Activated CD4-positive, alpha-beta T cell treated with anti-CD3 and anti-CD28 coated beads, Interleukin-2, amount 10 ng/mL, durations not matched to agents 24 days and 14 days (primary cell): ENCODE measurements at regions of chr6 and their contacts with region 1.

Region 1: GRCh38 chr6:122399384-122400158 is at the start of gene HSF2:
- DNase-seq: peak; percentile 97
- H3K4me3 Mint-ChIP-seq: peak within 1 kb of the TSS; percentile 99
- H3K27ac Mint-ChIP-seq: peak within 1 kb of the TSS; percentile 96
- H3K4me1 Mint-ChIP-seq: peaks cover 31% of the 10 kb centered on the region
- H3K27me3 Mint-ChIP-seq: no peaks in the 10 kb centered on the region
- total RNA-seq, gene HSF2: 15.3 and 16.1 TPM in 2 replicates

Region 2: GRCh38 chr6:121334299-121335086 is 1065.1 kb before region 1 on chr6 and contains the start of gene TBC1D32:
- intact Hi-C with region 1: loop called (anchors 1 kb)
- DNase-seq: peak; percentile 96
- H3K4me3 Mint-ChIP-seq: peak within 1 kb of the TSS; percentile 91
- H3K27ac Mint-ChIP-seq: peak within 1 kb of the TSS; percentile 98
- H3K4me1 Mint-ChIP-seq: peaks cover 31% of the 10 kb centered on the region
- H3K27me3 Mint-ChIP-seq: peaks cover 3% of the 10 kb centered on the region
- total RNA-seq, gene TBC1D32: 7.6 and 8.1 TPM in 2 replicates

Region 3: GRCh38 chr6:121647905-121648304 is 751.7 kb before region 1 on chr6:
- intact Hi-C with region 1: no loop called
- DNase-seq: no peak
- H3K4me3 Mint-ChIP-seq: no peak overlapping the region
- H3K27ac Mint-ChIP-seq: no peak overlapping the region
- H3K4me1 Mint-ChIP-seq: peaks cover 28% of the 10 kb centered on the region
- H3K27me3 Mint-ChIP-seq: no peaks in the 10 kb centered on the region

Region 4: DNA sequence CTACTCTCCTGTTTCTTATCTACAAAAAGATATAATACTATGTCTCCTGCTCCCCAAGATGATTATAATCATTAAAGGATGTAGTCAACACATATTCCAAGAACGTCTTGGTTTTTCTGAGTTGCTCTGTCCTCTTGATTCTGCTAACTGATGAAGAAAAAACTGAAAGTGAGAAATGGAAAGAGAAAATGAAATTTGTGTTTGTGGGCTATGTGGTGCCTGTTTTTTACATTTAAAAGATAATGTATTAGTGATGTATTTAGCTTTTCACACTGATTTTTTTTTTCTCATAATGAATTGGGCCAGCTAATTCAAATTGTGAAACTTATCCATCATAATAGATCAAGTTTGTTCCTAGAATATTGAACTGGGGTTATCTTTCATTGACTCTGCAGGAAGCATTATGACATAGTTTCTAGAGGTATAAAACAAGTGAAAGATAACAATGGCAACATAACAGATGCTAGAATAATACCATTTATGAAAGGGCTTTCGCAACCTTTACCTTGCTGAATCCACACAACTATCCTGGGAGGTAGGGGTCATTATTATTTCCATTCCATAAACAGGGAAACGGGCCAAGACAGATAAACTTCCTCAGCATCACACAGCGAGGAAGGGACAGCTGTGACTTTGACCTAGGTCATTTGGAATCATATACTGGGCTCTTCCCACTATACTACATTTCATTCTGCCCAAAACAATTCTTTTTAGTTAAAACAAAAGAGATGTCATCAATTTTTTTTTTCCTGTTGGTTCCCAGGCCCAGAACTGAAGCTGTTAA is 627.4 kb before region 1 on chr6:
- intact Hi-C with region 1: loop called (anchors 10 kb)
- DNase-seq: peak; percentile 56
- H3K4me3 Mint-ChIP-seq: peak overlapping the region; percentile 34
- H3K27ac Mint-ChIP-seq: peak overlapping the region; percentile 82
- H3K4me1 Mint-ChIP-seq: peaks cover 21% of the 10 kb centered on the region
- H3K27me3 Mint-ChIP-seq: peaks cover 2% of the 10 kb centered on the region

Region 5: GRCh38 chr6:122381497-122382265 is 17.9 kb before region 1 on chr6:
- intact Hi-C with region 1: loop called (anchors 2 kb)
- DNase-seq: peak; percentile 87
- H3K4me3 Mint-ChIP-seq: no peak overlapping the region
- H3K27ac Mint-ChIP-seq: no peak overlapping the region
- H3K4me1 Mint-ChIP-seq: peaks cover 2% of the 10 kb centered on the region
- H3K27me3 Mint-ChIP-seq: peaks cover 28% of the 10 kb centered on the region

Region 6: DNA sequence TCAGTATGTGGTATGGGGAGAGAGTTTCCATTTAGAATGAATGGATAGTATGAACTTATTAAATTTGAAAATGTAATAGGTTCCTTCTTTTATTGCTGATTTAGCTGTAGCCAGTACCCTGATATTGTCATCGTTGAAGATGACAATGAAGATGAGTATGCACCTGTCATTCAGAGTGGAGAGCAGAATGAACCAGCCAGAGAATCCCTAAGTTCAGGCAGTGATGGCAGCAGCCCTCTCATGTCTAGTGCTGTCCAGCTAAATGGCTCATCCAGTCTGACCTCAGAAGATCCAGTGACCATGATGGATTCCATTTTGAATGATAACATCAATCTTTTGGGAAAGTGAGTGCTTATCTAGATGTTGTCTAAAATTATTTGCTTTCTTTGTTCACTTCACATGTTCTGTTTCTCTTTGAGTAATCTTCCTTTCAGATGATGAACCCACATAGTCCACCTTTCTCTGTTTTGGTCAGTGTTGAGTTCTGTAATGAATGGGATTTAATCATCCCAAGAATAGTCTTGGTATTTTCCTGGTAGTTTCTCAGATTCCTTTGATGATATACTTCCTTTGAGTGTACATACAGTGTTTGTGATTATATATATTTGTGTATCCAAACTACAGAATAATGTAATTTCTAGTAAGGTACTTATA is 23.2 kb after region 1 on chr6:
- intact Hi-C with region 1: loop called (anchors 2 kb)
- DNase-seq: no peak
- H3K4me3 Mint-ChIP-seq: no peak overlapping the region
- H3K27ac Mint-ChIP-seq: no peak overlapping the region
- H3K4me1 Mint-ChIP-seq: peaks cover 4% of the 10 kb centered on the region
- H3K27me3 Mint-ChIP-seq: no peaks in the 10 kb centered on the region

Region 7: DNA sequence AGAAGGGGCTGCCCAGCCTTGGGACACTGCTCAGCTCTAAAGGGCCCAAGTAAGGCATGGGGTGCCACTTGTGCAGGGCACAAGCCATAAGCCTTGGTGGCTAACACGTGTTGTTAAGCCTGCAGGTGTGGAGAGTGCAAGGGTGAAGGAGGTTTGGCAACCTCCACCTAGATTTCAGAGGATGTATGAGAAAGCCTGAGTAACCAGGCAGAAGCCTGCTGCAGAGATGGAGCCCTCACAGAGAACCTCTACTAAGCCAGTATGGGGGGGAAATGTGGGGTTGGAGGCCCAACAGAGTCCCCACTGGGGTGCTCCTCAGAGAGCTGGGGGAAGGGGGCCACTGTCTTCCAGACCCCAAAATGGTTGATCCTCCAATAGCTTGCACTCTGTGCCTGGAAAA is 39.4 kb after region 1 on chr6:
- intact Hi-C with region 1: loop called (anchors 5 kb)
- DNase-seq: no peak
- H3K4me3 Mint-ChIP-seq: no peak overlapping the region
- H3K27ac Mint-ChIP-seq: no peak overlapping the region
- H3K4me1 Mint-ChIP-seq: no peaks in the 10 kb centered on the region
- H3K27me3 Mint-ChIP-seq: no peaks in the 10 kb centered on the region

Region 8: GRCh38 chr6:122471107-122472021 is 71.8 kb after region 1 on chr6 and contains the start of gene SERINC1:
- intact Hi-C with region 1: loop called (anchors 1 kb)
- DNase-seq: peak; percentile 97
- H3K4me3 Mint-ChIP-seq: peak within 1 kb of the TSS; percentile 99
- H3K27ac Mint-ChIP-seq: peak within 1 kb of the TSS; percentile 99
- H3K4me1 Mint-ChIP-seq: peaks cover 21% of the 10 kb centered on the region
- H3K27me3 Mint-ChIP-seq: no peaks in the 10 kb centered on the region
- total RNA-seq, gene SERINC1: 38.6 and 40.9 TPM in 2 replicates